ENCODE measurements at regions of chr6 and their contacts with region 1.

Region 1: GRCh38 chr6:17178754-17179529 is 77.1 kb downstream of the STMND1 start:
- H3K4me3 ChIP-seq: no peak overlapping the region
- H3K27ac ChIP-seq: no peak overlapping the region
- H3K4me1 ChIP-seq: no peaks in the 10 kb centered on the region
- CTCF ChIP-seq: no peak

Region 2: GRCh38 chr6:17167327-17167979 is 11.5 kb before region 1 on chr6:
- CTCF ChIA-PET with region 1: interaction called, 11 read pairs
- POLR2A ChIA-PET with region 1: no interaction called
- H3K4me3 ChIP-seq: no peak overlapping the region
- H3K27ac ChIP-seq: no peak overlapping the region
- H3K4me1 ChIP-seq: no peaks in the 10 kb centered on the region
- CTCF ChIP-seq: peak; percentile 51; the same call in 1 of the 2 replicates

Region 3: DNA sequence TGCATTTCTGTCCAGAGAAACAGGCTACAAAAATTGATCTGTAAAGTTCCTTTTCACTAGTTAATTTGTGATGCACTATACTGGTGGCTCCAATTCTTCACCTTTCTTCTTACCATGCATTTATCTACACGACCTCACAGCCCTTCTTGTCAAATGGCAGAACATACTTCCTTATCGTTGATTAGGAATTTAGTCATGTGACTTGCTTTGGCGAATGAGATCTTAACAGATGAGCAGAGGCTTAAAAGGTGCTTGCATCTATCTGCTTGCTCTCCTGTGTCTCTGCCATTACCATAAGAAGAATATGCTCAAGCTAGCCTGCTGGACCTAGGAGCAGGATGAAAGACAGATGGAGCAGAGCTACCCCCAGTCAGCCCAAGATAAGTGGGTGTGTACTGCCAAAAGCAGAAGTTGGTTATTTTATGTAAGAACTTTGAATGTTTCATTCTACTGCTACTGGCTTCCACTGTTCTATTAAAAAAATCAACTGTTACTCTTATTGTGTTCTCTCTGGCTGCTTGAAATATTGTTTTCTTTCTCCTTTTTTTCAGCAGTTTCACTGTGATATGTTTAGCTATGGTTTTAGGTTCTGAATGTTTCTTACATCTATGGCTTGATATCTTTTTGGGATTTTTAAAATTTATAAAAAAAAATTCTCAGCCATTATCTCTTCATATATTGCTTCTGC is 62.0 kb after region 1 on chr6:
- CTCF ChIA-PET with region 1: no interaction called
- POLR2A ChIA-PET with region 1: no interaction called
- H3K4me3 ChIP-seq: no peak overlapping the region
- H3K27ac ChIP-seq: no peak overlapping the region
- H3K4me1 ChIP-seq: no peaks in the 10 kb centered on the region
- CTCF ChIP-seq: no peak